Activated T-helper 1 cell treated with anti-CD3 and anti-CD28 coated beads, Interleukin-12 subunit alpha, Interleukin-12 subunit beta, Interleukin-2, Interleukin-4 antibody, amounts not matched to agents 30 ng/mL and 10 ng/mL and 1 ng/mL, durations not matched to agents 14 hours and 24 hours and 36 hours (primary cell): ENCODE measurements at regions of chr2 and their contacts with region 1.

Region 1: DNA sequence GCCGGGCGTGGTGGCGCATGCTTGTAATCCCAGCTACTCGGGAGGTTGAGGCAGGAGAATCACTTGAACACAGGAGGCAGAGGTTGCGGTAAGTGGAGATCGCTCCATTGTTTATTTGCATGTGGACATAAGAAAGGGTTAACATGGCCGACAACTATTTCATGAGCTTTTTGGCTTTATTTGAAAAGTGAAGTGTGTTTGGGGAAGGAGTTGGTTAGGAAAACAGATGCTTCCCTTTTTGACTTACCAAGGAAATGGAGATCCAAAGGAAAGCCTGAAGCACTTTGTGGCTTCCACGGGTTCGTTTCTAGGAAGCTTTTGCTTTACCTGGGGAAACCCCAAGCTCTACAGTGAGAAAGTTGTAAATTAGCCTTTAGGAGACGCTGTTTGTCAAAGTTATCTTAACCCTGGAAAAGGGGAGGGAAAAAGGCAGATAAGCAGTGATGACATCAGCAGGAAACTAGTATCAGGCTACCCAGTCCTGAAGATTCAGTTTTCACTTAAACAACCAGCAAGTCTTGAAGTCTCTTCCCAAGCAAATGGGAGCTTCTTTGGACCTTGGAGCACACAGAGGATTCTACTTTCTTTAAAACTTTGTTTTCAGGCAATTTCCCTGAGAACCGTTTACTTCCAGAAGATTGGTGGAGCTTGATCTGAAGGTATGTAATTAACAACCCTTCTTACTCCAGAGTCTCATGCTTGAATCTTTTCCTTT is at the start of gene CASP10:
- DNase-seq: peak; percentile 48
- H3K4me3 Mint-ChIP-seq: peak within 1 kb of the TSS; percentile 96
- H3K27ac Mint-ChIP-seq: peak within 1 kb of the TSS; percentile 90
- H3K4me1 Mint-ChIP-seq: peaks cover 65% of the 10 kb centered on the region
- H3K27me3 Mint-ChIP-seq: peaks cover 4% of the 10 kb centered on the region
- total RNA-seq, gene CASP10: 13.5 and 15.7 TPM in 2 replicates

Region 2: GRCh38 chr2:201130524-201131186 is 52.2 kb before region 1 on chr2:
- intact Hi-C with region 1: loop called (anchors 1 kb)
- DNase-seq: peak; percentile 45
- H3K4me3 Mint-ChIP-seq: peak overlapping the region; percentile 90
- H3K27ac Mint-ChIP-seq: peak overlapping the region; percentile 99
- H3K4me1 Mint-ChIP-seq: peaks cover 56% of the 10 kb centered on the region
- H3K27me3 Mint-ChIP-seq: no peaks in the 10 kb centered on the region

Region 3: GRCh38 chr2:201151127-201151981 is 31.5 kb before region 1 on chr2:
- intact Hi-C with region 1: no loop called
- DNase-seq: no peak
- H3K4me3 Mint-ChIP-seq: no peak overlapping the region
- H3K27ac Mint-ChIP-seq: peak overlapping the region; percentile 74
- H3K4me1 Mint-ChIP-seq: peaks cover 57% of the 10 kb centered on the region
- H3K27me3 Mint-ChIP-seq: no peaks in the 10 kb centered on the region

Region 4: DNA sequence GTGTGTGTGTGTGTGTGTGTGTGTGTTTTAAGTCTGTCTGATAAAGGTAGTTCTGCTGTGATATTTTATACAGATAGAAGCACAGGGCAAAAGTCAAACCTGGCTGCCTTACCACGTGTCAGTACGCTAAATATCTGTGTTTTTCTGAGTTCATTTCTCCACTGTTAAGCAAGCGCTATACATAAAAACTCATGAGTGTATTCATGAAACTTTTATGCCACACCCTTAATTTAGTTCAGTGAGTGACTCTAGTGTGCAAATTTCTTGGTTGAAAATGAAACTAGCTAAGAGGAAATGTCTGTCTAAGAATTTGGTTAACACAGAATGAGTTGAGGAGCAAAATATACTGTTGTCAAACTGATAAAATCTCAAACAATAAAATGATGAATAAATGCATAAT is 11.3 kb after region 1 on chr2:
- intact Hi-C with region 1: loop called (anchors 1 kb)
- DNase-seq: no peak
- H3K4me3 Mint-ChIP-seq: peak overlapping the region; percentile 38
- H3K27ac Mint-ChIP-seq: peak overlapping the region; percentile 57
- H3K4me1 Mint-ChIP-seq: peaks cover 65% of the 10 kb centered on the region
- H3K27me3 Mint-ChIP-seq: no peaks in the 10 kb centered on the region

Region 5: DNA sequence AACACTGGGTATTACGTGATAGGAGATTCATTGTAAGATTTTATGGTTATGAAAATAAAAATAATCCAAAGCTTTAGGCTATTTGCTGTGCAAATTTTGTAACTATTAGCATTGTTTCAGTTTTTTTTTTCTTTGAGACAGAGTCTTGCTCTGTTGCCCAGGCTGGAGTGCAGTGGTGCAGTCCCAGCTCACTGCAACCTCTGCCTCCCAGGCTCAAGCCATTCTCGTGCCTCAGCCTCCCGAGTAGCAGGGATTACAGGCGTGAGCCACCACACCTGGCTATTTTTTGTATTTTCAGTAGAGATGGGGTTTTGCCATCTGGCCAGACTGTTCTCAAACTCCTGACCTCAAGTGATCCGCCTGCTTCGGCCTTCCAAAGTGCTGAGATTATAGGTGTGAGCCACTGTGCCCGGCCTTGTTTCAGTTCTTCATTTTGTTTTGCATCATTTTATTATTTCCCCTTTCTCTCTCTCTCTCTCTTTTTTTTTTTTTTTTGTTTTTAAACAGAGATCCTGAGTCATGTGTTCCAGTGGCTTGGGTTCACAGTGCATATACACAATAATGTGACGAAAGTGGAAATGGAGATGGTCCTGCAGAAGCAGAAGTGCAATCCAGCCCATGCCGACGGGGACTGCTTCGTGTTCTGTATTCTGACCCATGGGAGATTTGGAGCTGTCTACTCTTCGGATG is 25.9 kb after region 1 on chr2:
- intact Hi-C with region 1: loop called (anchors 2 kb)
- DNase-seq: no peak
- H3K4me3 Mint-ChIP-seq: no peak overlapping the region
- H3K27ac Mint-ChIP-seq: no peak overlapping the region
- H3K4me1 Mint-ChIP-seq: peaks cover 8% of the 10 kb centered on the region
- H3K27me3 Mint-ChIP-seq: no peaks in the 10 kb centered on the region

Region 6: GRCh38 chr2:201363857-201364560 is 181.2 kb after region 1 on chr2:
- intact Hi-C with region 1: loop called (anchors 1 kb)
- DNase-seq: peak; percentile 30
- H3K4me3 Mint-ChIP-seq: no peak overlapping the region
- H3K27ac Mint-ChIP-seq: no peak overlapping the region
- H3K4me1 Mint-ChIP-seq: peaks cover 45% of the 10 kb centered on the region
- H3K27me3 Mint-ChIP-seq: no peaks in the 10 kb centered on the region

Region 7: GRCh38 chr2:202265467-202266277 is 1082.9 kb after region 1 on chr2 and contains the start of gene NOP58:
- intact Hi-C with region 1: loop called (anchors 10 kb)
- DNase-seq: peak; percentile 91
- H3K4me3 Mint-ChIP-seq: peak within 1 kb of the TSS; percentile 55
- H3K27ac Mint-ChIP-seq: peak within 1 kb of the TSS; percentile 45
- H3K4me1 Mint-ChIP-seq: peaks cover 19% of the 10 kb centered on the region
- H3K27me3 Mint-ChIP-seq: no peaks in the 10 kb centered on the region
- total RNA-seq, gene NOP58: 227 and 241 TPM in 2 replicates